Dendritic cell treated with granulocyte-macrophage colony-stimulating factor and Interleukin-4, amounts not matched to agents 40 ng/mL and 50 ng/mL, for 4 days (primary cell): ENCODE measurements at regions of chr7 and their contacts with region 1.

Region 1: DNA sequence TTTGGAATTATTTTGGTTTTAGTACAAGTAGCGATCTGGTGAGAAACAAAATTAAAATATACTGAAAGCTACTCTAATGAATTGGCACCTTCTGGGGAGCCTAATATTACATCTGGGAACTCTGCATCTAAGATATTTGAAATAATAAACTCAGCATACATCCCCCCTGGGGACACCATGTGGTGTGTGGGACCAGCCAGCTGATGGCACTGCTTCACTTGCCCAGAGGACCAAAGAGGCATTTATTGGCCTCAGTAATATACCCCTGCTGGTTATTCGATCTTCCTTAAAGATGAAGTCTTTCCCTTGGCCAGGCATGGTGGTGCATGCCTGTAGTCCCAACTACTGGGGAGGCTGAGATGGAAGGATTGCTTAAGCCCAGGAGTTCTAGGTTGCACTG is 195.1 kb upstream of the AUTS2 start:
- H3K4me3 Mint-ChIP-seq: no peak overlapping the region
- H3K27ac Mint-ChIP-seq: no peak overlapping the region
- H3K4me1 Mint-ChIP-seq: peaks cover 5% of the 10 kb centered on the region
- H3K27me3 Mint-ChIP-seq: no peaks in the 10 kb centered on the region

Region 2: DNA sequence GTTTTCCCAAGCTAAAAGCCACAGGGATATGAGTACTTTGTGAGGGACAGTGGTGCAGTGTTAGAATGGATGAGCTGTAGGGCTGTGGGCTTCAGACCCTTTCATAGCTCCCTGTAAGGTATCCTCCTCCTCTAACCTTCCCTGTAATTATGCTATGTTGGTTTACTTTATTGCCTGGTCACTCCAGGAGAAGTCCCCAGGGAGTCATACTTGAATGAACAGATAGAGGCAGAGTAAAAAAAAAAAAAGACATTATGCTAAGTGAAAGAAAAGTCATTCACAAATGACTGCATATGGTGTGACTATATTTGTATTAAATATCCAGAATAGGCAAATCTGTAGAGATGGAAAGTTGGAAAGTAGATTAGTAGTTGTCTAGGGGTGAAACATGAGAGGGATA is 629.5 kb after region 1 on chr7:
- intact Hi-C with region 1: loop called (anchors 5 kb)
- H3K4me3 Mint-ChIP-seq: no peak overlapping the region
- H3K27ac Mint-ChIP-seq: no peak overlapping the region
- H3K4me1 Mint-ChIP-seq: no peaks in the 10 kb centered on the region
- H3K27me3 Mint-ChIP-seq: no peaks in the 10 kb centered on the region